Psoas muscle (tissue), 8 donors: ENCODE measurements at regions of chr17 and their contacts with region 1.

Region 1: GRCh38 chr17:7351665-7352501 is at the start of gene KCTD11:
- DNase-seq: peak; percentile 94 to 95
- ATAC-seq: peak; percentile 75 to 80 (median 78)
- H3K4me3 ChIP-seq: peak within 1 kb of the TSS; percentile 98
- H3K27ac ChIP-seq: peak within 1 kb of the TSS; percentile 100
- H3K4me1 ChIP-seq: peaks cover 51% of the 10 kb centered on the region
- H3K27me3 ChIP-seq: no peaks in the 10 kb centered on the region
- CTCF ChIP-seq: no peak
- total RNA-seq, gene KCTD11: 4.5 to 5.2 (median 5.1) TPM

Region 2: DNA sequence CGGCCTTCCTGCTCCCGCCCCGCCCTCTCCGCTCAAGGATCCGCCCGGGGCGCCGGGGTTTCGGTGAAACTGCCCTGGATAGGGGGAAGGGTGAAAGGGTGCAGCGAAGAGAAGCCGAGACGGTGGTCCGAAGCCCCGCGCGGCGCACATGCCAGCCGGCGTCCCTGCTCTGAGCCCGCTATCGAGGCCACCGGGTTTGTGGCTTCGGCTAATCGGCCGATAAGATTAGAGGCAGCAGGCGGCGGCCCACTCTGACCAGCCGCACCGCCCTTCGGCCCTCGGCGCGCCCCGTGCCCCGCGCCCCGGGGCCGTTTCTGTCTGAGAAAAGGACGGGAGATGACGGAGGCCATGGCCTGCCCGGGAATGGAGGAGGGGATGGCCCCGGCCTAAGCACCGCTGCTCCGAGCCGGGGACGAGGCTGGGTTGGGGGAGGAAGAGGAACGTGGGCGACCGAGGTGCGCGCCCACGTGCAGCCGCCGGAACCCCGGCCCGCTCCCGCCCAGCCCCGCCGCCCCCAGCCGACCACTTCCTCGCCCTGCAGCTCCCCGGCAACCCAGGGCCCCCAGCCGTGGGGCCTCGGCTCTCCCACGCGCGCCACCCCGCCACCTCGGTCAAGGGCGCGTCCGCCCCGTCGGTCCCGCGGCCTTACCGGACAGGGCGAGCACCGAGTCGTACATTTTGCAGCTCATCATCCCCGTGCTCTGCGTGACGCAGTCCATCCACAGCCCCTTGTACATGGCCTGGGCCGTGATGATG is 90.5 kb before region 1 on chr17:
- intact Hi-C with region 1: loop called in 1 of 2 experiments (anchors 10 kb)
- DNase-seq: peak in 1 of 2 donors; percentile 70
- ATAC-seq: peak; percentile 33 to 63 (median 62)
- H3K4me3 ChIP-seq: peak overlapping the region; percentile 66
- H3K27ac ChIP-seq: no peak overlapping the region
- H3K4me1 ChIP-seq: peaks cover 9% of the 10 kb centered on the region
- H3K27me3 ChIP-seq: peaks cover 0 to 50% (median 21%) of the 10 kb centered on the region in 3 donors
- CTCF ChIP-seq: no peak

Region 3: DNA sequence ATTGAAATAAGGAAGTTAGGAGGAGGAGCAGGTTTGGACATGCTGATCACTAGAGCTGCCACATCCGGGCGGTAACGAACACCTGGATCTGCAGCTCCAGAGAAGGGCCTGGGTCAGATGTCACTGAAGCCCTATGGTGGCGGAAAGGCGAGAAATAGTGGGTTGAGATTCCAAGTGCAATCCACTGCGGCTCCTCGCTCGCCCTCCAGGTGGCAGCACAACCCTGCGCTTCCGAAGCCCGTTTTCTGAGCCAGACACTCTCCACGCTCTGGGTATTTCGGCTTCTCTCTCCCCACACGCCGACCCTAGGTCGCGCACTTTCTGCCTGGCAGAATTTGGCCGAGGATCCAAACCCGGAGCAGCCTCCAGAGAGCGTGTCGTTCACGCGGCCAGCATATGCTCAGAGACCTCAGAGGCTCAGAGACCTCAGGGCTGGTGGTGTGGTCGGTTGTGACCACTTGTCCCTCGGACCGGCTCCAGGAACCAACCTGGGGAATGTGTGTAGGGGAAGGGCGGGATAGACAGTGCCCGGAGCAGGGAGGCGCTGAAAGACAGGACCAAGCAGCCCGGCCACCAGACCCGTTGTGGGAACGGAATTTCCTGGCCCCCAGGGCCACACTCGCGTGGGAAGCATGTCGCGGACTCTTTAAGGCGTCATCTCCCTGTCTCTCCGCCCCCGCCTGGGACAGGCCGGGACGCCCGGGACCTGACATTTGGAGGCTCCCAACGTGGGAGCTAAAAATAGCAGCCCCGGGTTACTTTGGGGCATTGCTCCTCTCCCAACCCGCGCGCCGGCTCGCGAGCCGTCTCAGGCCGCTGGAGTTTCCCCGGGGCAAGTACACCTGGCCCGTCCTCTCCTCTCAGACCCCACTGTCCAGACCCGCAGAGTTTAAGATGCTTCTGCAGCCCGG is 71.1 kb before region 1 on chr17:
- intact Hi-C with region 1: loop called (anchors 5 kb)
- DNase-seq: peak; percentile 85 to 93
- ATAC-seq: peak; percentile 67 to 78 (median 70)
- H3K4me3 ChIP-seq: peak overlapping the region; percentile 86
- H3K27ac ChIP-seq: peak overlapping the region; percentile 96
- H3K4me1 ChIP-seq: peaks cover 29% of the 10 kb centered on the region
- H3K27me3 ChIP-seq: no peaks in the 10 kb centered on the region
- CTCF ChIP-seq: peak; percentile 89

Region 4: GRCh38 chr17:7314719-7315569 is 36.9 kb before region 1 on chr17 and contains the start of gene GPS2:
- intact Hi-C with region 1: no loop called
- DNase-seq: peak; percentile 94 to 96
- ATAC-seq: peak; percentile 83 to 94 (median 90)
- H3K4me3 ChIP-seq: peak within 1 kb of the TSS; percentile 98
- H3K27ac ChIP-seq: peak within 1 kb of the TSS; percentile 92
- H3K4me1 ChIP-seq: peaks cover 51% of the 10 kb centered on the region
- H3K27me3 ChIP-seq: no peaks in the 10 kb centered on the region
- CTCF ChIP-seq: no peak
- total RNA-seq, gene GPS2: 71.8 to 101 (median 82.5) TPM

Region 5: GRCh38 chr17:7394452-7395191 is 42.7 kb after region 1 on chr17 and contains the start of gene PLSCR3:
- intact Hi-C with region 1: loop called (anchors 5 kb)
- DNase-seq: peak; percentile 89 to 92
- ATAC-seq: peak; percentile 89 to 91 (median 90)
- H3K4me3 ChIP-seq: peak within 1 kb of the TSS; percentile 95
- H3K27ac ChIP-seq: peak within 1 kb of the TSS; percentile 91
- H3K4me1 ChIP-seq: no peaks in the 10 kb centered on the region
- H3K27me3 ChIP-seq: no peaks in the 10 kb centered on the region
- CTCF ChIP-seq: no peak
- total RNA-seq, gene PLSCR3: 13.9 to 16.2 (median 15.1) TPM

Region 6: DNA sequence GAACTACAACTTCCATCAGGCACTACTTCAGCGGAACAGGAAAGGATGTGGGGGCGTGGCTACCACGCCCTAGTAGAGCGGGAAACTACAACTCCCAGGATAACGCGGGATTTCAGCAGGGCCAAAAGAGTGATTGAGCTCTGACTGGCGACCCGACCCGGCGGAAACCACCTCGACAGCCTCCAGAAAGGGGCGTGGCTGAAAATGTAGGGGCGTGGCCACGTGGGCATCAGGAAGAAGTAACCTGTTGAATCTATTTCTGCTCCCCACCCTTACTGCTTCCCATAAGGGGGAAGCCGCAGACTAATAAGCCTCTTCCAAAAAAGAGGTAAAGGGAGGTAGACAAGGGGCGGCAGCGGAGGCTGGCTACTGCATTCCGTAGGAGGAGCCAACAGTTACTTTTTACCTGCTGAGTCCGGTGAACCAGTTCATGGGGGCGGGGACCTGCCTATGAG is 83.4 kb after region 1 on chr17 and contains the start of gene TMEM102:
- intact Hi-C with region 1: loop called (anchors 2 to 5 kb)
- DNase-seq: peak; percentile 94 to 97
- ATAC-seq: peak; percentile 79 to 84 (median 82)
- H3K4me3 ChIP-seq: peak within 1 kb of the TSS; percentile 72
- H3K27ac ChIP-seq: peak within 1 kb of the TSS; percentile 100
- H3K4me1 ChIP-seq: peaks cover 33% of the 10 kb centered on the region
- H3K27me3 ChIP-seq: no peaks in the 10 kb centered on the region
- CTCF ChIP-seq: no peak
- total RNA-seq, gene TMEM102: 0.41 to 0.95 (median 0.68) TPM

Region 7: DNA sequence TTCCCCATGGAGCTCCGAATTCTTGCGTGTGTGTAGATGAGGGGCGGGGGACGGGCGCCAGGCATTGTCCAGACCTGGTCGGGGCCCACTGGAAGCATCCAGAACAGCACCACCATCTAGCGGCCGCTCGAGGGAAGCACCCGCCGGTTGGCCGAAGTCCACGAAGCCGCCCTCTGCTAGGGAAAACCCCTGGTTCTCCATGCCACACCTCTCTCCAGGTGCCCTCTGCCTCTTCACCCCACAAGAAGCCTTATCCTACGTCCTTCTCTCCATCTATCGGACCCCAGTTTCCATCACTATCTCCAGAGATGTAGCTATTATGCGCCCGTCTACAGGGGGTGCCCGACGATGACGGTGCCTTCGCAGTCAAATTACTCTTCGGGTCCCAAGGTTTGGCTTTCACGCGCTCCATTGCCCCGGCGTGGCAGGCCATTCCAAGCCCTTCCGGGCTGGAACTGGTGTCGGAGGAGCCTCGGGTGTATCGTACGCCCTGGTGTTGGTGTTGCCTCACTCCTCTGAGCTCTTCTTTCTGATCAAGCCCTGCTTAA is 209.2 kb after region 1 on chr17:
- intact Hi-C with region 1: loop called (anchors 2 to 5 kb)
- DNase-seq: peak; percentile 92 to 96
- ATAC-seq: peak; percentile 82 to 88 (median 84)
- H3K4me3 ChIP-seq: peak overlapping the region; percentile 96
- H3K27ac ChIP-seq: peak overlapping the region; percentile 94
- H3K4me1 ChIP-seq: peaks cover 45% of the 10 kb centered on the region
- H3K27me3 ChIP-seq: no peaks in the 10 kb centered on the region
- CTCF ChIP-seq: peak; percentile 86